Panc1 (cell line): ENCODE measurements at regions of chr15 and their contacts with region 1.

Region 1: GRCh38 chr15:44728576-44729407 is 7.5 kb upstream of the TRIM69 start:
- DNase-seq: peak; percentile 98
- ATAC-seq: peak; percentile 92
- H3K4me3 ChIP-seq: peak overlapping the region; percentile 91 to 96
- H3K27ac ChIP-seq: peak overlapping the region; percentile 99
- H3K4me1 ChIP-seq: peaks cover 43% of the 10 kb centered on the region
- H3K27me3 ChIP-seq: no peaks in the 10 kb centered on the region
- CTCF ChIP-seq: no peak

Region 2: DNA sequence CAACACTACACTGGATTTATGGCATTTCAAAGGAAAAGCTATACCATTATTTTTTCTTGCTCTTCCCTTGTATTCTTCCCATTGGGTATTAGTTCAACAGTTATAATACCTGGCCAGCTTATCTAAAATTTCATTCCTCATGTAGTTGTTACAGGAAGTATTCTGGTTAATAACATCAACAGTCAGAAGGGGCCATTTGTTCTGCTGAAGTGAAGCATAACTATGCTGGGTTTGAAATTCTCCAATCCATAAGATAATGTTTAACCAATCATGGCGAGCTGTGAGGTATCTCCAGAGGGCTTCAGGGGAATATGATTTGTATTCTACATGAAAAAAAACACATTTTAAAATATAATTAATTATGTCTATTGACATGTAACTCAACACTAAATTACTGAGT is 108.7 kb before region 1 on chr15:
- CTCF ChIA-PET with region 1: no interaction called
- POLR2A ChIA-PET with region 1: interaction called, 10 read pairs
- in situ Hi-C with region 1: no loop called
- intact Hi-C with region 1: no loop called
- DNase-seq: no peak
- ATAC-seq: no peak
- H3K4me3 ChIP-seq: no peak overlapping the region
- H3K27ac ChIP-seq: no peak overlapping the region
- H3K4me1 ChIP-seq: no peaks in the 10 kb centered on the region
- H3K27me3 ChIP-seq: no peaks in the 10 kb centered on the region
- CTCF ChIP-seq: no peak